ENCODE measurements at regions of chr16 and their contacts with region 1.

Region 1: DNA sequence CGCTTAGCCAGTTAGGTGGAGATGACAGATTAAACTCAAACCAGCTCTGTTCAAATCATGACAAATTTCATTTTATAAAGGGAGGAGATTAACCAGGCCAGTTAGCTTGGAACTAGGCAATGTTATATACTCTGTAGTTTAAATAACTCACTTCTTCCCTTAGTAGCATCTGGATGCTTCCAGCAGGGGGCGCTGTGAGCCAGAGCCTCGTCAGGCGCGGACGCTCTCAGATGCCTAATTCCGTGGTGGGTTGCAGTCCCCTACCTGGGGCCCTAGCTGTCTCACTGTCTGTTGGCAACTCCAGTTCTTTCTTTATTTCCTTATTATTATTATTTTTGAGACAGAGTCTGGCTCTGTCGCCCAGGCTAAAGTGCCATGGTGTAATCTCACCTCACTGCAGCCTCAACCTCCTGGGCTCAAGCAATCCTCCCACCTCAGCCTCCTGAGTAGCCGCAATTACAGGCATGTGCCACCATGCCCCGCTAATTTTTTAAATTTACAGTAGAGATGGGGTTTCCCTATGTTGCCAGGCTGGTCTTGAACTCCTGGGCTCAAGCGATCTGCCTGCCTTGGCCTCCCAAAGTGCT is 17.3 kb upstream of the WFDC1 start:
- DNase-seq: peak; percentile 48
- ATAC-seq: peak; percentile 91
- H3K4me3 ChIP-seq: no peak overlapping the region
- H3K27ac ChIP-seq: no peak overlapping the region
- H3K4me1 ChIP-seq: no peaks in the 10 kb centered on the region
- H3K27me3 ChIP-seq: no peaks in the 10 kb centered on the region
- CTCF ChIP-seq: peak; percentile 94 to 99 (median 98)
- POLR2A ChIP-seq: no peak
- RAD21 ChIP-seq: peak; percentile 97

Region 2: GRCh38 chr16:84103678-84104077 is 173.7 kb before region 1 on chr16:
- CTCF ChIA-PET with region 1: no interaction called
- POLR2A ChIA-PET with region 1: no interaction called
- RAD21 ChIA-PET with region 1: no interaction called
- intact Hi-C with region 1: no loop called
- DNase-seq: no peak
- ATAC-seq: no peak
- H3K4me3 ChIP-seq: no peak overlapping the region
- H3K27ac ChIP-seq: no peak overlapping the region
- H3K4me1 ChIP-seq: peaks cover 16 to 17% of the 10 kb centered on the region in 2 experiments
- H3K27me3 ChIP-seq: no peaks in the 10 kb centered on the region
- CTCF ChIP-seq: no peak
- POLR2A ChIP-seq: no peak
- RAD21 ChIP-seq: no peak

Region 3: GRCh38 chr16:84258266-84258665 is 19.1 kb before region 1 on chr16:
- CTCF ChIA-PET with region 1: interaction called, 22 read pairs
- POLR2A ChIA-PET with region 1: no interaction called
- RAD21 ChIA-PET with region 1: no interaction called
- intact Hi-C with region 1: no loop called
- DNase-seq: no peak
- ATAC-seq: no peak
- H3K4me3 ChIP-seq: no peak overlapping the region
- H3K27ac ChIP-seq: no peak overlapping the region
- H3K4me1 ChIP-seq: no peaks in the 10 kb centered on the region
- H3K27me3 ChIP-seq: peaks cover 11% of the 10 kb centered on the region; the same call in 1 of the 2 replicates
- CTCF ChIP-seq: no peak
- POLR2A ChIP-seq: no peak
- RAD21 ChIP-seq: no peak

Region 4: GRCh38 chr16:84308120-84308519 is 30.8 kb after region 1 on chr16:
- CTCF ChIA-PET with region 1: interaction called, 27 read pairs
- POLR2A ChIA-PET with region 1: no interaction called
- RAD21 ChIA-PET with region 1: interaction called, 3 to 5 read pairs
- intact Hi-C with region 1: loop called (anchors 1 kb)
- DNase-seq: peak; percentile 63
- ATAC-seq: peak; percentile 89
- H3K4me3 ChIP-seq: no peak overlapping the region
- H3K27ac ChIP-seq: no peak overlapping the region
- H3K4me1 ChIP-seq: peaks cover 6 to 16% of the 10 kb centered on the region in 2 experiments; a peak in 3 of 4 replicates
- H3K27me3 ChIP-seq: no peaks in the 10 kb centered on the region
- CTCF ChIP-seq: peak; percentile 88 to 95 (median 93)
- POLR2A ChIP-seq: no peak
- RAD21 ChIP-seq: peak; percentile 98

Region 5: DNA sequence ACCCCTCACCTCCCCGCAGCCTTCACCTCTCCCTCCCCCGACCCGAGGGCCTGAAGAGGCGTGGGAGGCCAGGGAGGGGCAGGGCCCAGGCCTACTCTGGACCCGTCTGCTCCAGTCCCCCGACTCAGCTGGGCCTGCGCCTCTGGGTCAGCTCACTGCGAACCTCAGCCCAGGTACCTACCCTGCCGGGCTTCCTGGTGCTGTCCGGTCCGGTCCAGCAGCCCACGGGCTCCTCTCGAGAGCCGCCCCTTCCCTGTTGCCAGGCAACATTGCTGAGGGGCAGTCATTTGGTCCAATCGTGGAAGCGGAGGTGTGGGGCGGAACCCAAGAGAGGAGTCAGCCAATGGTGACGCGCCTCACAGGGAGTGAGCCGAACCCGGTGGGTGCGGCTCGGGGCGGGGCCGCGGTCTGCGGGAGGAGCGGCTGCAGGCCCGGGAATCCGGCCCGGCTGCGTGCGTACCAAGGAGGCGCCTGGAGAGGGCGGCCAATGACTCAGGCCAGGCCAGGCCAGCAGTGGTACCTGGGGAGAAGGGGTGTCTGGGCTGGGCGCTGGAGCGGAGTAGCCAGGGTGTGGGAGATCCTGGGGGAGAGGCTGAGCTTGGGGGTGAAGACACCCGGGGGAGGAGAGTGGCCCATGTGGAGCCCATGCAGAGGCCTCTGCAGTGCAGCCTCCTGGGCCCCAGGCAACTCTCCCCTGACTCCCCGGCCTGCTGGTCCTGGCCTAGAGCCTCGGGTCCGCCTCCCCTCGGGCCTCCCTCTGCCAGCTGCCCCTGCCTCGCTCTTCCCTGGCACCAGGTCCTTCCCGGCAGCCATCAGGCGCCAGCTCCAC is 227.3 kb after region 1 on chr16 and contains the start of gene MEAK7:
- CTCF ChIA-PET with region 1: interaction called, 33 read pairs
- POLR2A ChIA-PET with region 1: no interaction called
- RAD21 ChIA-PET with region 1: interaction called, 4 to 10 read pairs
- intact Hi-C with region 1: loop called (anchors 1 kb)
- DNase-seq: peak; percentile 98
- ATAC-seq: peak; percentile 84
- H3K4me3 ChIP-seq: peak within 1 kb of the TSS; percentile 88 to 98
- H3K27ac ChIP-seq: peak within 1 kb of the TSS; percentile 82
- H3K4me1 ChIP-seq: peaks cover 54 to 69% of the 10 kb centered on the region in 2 experiments
- H3K27me3 ChIP-seq: no peaks in the 10 kb centered on the region
- CTCF ChIP-seq: no peak
- POLR2A ChIP-seq: peak; percentile 67
- RAD21 ChIP-seq: no peak
- total RNA-seq, gene MEAK7: 32.2 TPM

Region 6: GRCh38 chr16:84569382-84569987 is 292.2 kb after region 1 on chr16:
- CTCF ChIA-PET with region 1: no interaction called
- POLR2A ChIA-PET with region 1: no interaction called
- RAD21 ChIA-PET with region 1: no interaction called
- intact Hi-C with region 1: no loop called
- DNase-seq: no peak
- ATAC-seq: no peak
- H3K4me3 ChIP-seq: no peak overlapping the region
- H3K27ac ChIP-seq: no peak overlapping the region
- H3K4me1 ChIP-seq: peaks cover 0 to 9% of the 10 kb centered on the region in 2 experiments; a peak in 1 of 4 replicates
- H3K27me3 ChIP-seq: no peaks in the 10 kb centered on the region
- CTCF ChIP-seq: no peak
- POLR2A ChIP-seq: no peak
- RAD21 ChIP-seq: no peak

Region 7: GRCh38 chr16:84617791-84618580 is 340.7 kb after region 1 on chr16 and contains the start of gene COTL1:
- CTCF ChIA-PET with region 1: interaction called, 3 read pairs
- POLR2A ChIA-PET with region 1: no interaction called
- RAD21 ChIA-PET with region 1: no interaction called
- intact Hi-C with region 1: loop called (anchors 1 kb)
- DNase-seq: peak; percentile 96
- ATAC-seq: peak; percentile 76
- H3K4me3 ChIP-seq: peak within 1 kb of the TSS; percentile 82 to 85
- H3K27ac ChIP-seq: peak within 1 kb of the TSS; percentile 86
- H3K4me1 ChIP-seq: peaks cover 18 to 64% of the 10 kb centered on the region in 2 experiments
- H3K27me3 ChIP-seq: no peaks in the 10 kb centered on the region
- CTCF ChIP-seq: no peak
- POLR2A ChIP-seq: peak; percentile 85
- RAD21 ChIP-seq: no peak
- total RNA-seq, gene COTL1: 276 TPM

Measured in HCT116 (cell line).